Heart right ventricle (tissue), 16 donors: ENCODE measurements at regions of chr19 and their contacts with region 1.

Region 1: GRCh38 chr19:2648528-2648937 is 54.0 kb downstream of the GNG7 start:
- DNase-seq: peak; percentile 55 to 72
- ATAC-seq: peak; percentile 75 to 88 (median 82)
- H3K4me3 ChIP-seq: no peak overlapping the region
- H3K27ac ChIP-seq: no peak overlapping the region
- H3K4me1 ChIP-seq: peaks cover 0 to 8% (median 0%) of the 10 kb centered on the region in 9 donors
- H3K27me3 ChIP-seq: peaks cover 0 to 2% (median 0%) of the 10 kb centered on the region in 7 donors
- CTCF ChIP-seq: peak; percentile 60 to 87 (median 76)

Region 2: DNA sequence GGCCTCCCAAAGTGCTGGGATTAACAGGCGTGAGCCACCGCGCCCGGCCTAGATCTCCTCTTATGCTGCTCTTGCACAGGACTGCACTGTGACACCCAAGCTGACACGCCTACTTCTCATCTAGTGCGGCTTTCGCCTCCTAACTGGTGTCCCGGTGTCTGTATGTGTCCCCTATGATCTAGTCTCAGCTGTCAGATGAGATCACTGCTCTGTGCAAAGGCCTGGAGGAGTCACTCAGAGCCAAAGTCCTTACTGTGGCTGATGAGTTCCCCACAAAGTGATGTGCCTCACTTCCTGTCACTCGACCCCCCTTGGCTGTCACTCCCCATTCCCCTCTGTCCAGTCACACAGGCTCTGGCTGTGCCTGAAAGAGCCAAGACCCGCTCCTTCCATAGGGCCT is 221.1 kb after region 1 on chr19:
- intact Hi-C with region 1: loop called in 7 of 10 experiments (anchors 5 to 10 kb)
- DNase-seq: no peak
- ATAC-seq: no peak
- H3K4me3 ChIP-seq: no peak overlapping the region
- H3K27ac ChIP-seq: no peak overlapping the region
- H3K4me1 ChIP-seq: no peaks in the 10 kb centered on the region
- H3K27me3 ChIP-seq: no peaks in the 10 kb centered on the region
- CTCF ChIP-seq: no peak

Region 3: DNA sequence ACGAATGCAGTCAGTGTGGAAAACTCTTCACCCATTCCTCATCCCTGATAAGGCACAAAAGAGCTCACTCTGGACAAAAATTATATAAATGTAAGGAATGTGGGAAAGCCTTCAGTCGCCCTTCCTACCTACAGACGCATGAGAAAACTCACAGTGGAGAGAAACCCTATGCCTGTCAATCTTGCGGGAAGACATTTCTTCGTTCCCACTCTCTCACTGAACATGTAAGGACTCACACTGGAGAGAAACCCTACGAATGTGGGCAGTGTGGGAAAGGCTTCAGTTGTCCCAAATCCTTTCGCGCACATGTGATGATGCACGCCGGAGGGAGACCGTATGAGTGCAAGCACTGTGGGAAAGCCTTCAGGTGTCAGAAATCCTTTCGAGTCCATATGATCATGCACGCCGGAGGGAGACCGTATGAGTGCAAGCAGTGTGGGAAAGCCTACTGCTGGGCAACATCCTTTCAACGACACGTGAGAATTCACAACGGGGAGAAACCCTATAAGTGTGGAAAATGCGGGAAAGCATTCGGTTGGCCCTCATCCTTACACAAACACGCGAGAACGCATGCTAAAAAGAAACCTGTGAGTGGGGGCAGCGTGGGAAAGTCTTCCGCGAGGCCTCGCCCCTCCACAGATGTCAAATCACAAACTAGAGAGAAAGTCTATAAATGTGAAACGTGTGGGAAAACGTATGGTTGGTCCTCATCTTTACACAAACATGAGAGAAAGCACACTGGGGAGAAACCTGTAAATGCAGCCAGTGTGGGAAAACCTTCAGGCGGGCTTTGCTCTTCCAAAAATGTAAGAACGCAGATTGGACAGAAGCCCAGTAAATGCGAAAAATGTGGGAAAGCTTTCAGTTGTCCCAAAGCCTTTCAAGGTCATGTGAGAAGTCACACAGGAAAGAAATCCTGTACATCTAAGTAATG is 229.1 kb after region 1 on chr19:
- intact Hi-C with region 1: loop called in 8 of 10 experiments (anchors 5 to 10 kb)
- DNase-seq: no peak
- ATAC-seq: no peak
- H3K4me3 ChIP-seq: no peak overlapping the region
- H3K27ac ChIP-seq: no peak overlapping the region
- H3K4me1 ChIP-seq: no peaks in the 10 kb centered on the region
- H3K27me3 ChIP-seq: peaks cover 0 to 4% (median 0%) of the 10 kb centered on the region in 7 donors
- CTCF ChIP-seq: no peak